ENCODE measurements at regions of chr16 and their contacts with region 1.

Region 1: DNA sequence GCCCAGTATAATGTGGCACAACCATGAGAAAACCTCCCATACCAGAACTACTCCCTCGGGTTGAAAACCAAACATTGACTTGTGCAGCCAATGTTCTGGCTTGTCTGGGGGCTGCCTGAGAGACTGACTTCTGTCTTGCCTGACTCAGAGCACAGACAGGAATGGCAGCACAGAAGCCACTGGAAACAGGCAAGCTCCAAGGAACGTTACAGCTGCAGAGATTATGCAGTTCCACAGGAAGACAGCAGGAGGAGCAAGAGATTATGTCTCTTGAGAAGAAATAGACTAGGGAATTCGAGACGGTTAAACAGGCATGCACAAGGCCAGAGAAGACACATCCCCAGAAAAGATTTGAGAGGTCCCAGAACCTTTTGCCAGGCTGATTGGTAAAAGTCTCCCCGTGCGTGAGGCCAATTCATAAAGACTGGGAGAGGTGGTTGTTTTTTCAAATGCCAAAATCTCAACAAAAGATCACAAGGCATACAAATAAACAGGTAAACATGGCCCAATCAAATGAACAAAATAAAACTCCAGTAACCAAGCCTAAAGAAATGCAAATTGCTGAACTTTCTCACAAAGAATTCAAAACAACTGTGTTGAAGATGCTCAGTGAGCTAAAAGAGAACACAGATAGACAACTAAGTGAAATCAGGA is 90.6 kb upstream of the CDH5 start:
- DNase-seq: peak; percentile 50 to 77
- H3K4me3 ChIP-seq: no peak overlapping the region
- H3K27ac ChIP-seq: no peak overlapping the region
- H3K4me1 ChIP-seq: peaks cover 0 to 5% (median 2%) of the 10 kb centered on the region in 4 experiments; a peak in 3 of 7 replicates
- H3K27me3 ChIP-seq: peaks cover 0 to 7% (median 1%) of the 10 kb centered on the region in 4 experiments; a peak in 3 of 7 replicates
- CTCF ChIP-seq: peak; percentile 11 to 83 (median 76)
- EP300 ChIP-seq: no peak
- POLR2A ChIP-seq: no peak
- RAD21 ChIP-seq: peak; percentile 61 to 73

Region 2: DNA sequence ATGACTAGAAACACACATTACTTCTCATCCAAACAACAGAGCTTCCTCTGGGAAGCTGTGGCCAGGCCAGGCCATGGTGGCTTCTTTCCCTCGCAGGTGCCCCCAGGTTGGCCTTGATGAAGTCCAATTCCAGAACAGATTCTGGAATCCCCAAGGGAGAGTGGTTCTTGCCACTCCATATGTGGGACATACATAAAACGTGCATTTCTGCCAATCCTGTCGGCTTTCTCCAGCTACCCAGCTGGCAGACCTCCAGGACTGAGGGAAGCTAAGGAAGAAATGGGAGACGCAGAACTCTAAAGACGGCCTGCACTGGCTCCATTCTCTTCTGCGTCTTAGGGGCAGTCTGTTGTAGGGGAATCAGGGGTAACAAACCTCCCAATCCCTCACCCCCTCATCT is 128.6 kb before region 1 on chr16:
- CTCF ChIA-PET with region 1: no interaction called
- POLR2A ChIA-PET with region 1: no interaction called
- DNase-seq: no peak
- H3K4me3 ChIP-seq: no peak overlapping the region
- H3K27ac ChIP-seq: no peak overlapping the region
- H3K4me1 ChIP-seq: no peaks in the 10 kb centered on the region
- H3K27me3 ChIP-seq: no peaks in the 10 kb centered on the region
- CTCF ChIP-seq: no peak
- EP300 ChIP-seq: no peak
- POLR2A ChIP-seq: no peak
- RAD21 ChIP-seq: no peak

Region 3: GRCh38 chr16:66287926-66288325 is 12.0 kb after region 1 on chr16:
- CTCF ChIA-PET with region 1: interaction called, 11 read pairs
- POLR2A ChIA-PET with region 1: no interaction called
- DNase-seq: no peak
- H3K4me3 ChIP-seq: no peak overlapping the region
- H3K27ac ChIP-seq: no peak overlapping the region
- H3K4me1 ChIP-seq: no peaks in the 10 kb centered on the region; a peak in 1 of 7 replicates
- H3K27me3 ChIP-seq: no peaks in the 10 kb centered on the region; a peak in 1 of 7 replicates
- CTCF ChIP-seq: no peak
- EP300 ChIP-seq: no peak
- POLR2A ChIP-seq: no peak
- RAD21 ChIP-seq: no peak

Region 4: DNA sequence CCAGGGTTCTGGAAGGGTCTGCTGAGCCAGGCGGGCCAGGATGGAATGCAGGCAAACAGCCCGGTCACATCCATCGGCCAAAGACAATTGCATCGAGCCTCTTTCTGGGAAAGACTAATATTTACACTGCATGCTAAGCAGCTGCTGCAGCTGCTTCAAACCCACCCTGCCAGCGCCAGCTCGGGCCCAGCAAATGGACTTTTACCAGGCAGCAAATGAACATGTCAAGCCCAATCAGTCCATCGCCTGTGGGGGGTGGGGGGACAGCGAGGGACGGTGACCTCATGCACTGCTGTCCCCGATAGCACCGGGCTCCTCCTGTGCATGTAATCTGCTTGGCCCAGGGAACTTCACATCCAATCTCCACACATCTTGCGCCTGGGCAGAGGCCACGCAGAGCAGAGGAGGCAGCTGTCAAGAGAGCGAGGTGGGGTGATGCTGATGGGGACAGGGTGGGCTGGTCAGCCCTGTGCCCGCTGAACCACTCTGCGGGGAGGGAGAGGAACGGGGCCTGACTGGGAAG is 51.1 kb after region 1 on chr16:
- CTCF ChIA-PET with region 1: interaction called, 13 read pairs
- POLR2A ChIA-PET with region 1: no interaction called
- DNase-seq: no peak
- H3K4me3 ChIP-seq: no peak overlapping the region
- H3K27ac ChIP-seq: no peak overlapping the region
- H3K4me1 ChIP-seq: peaks cover 2 to 10% (median 4%) of the 10 kb centered on the region in 4 experiments; a peak in 6 of 7 replicates
- H3K27me3 ChIP-seq: no peaks in the 10 kb centered on the region
- CTCF ChIP-seq: no peak
- EP300 ChIP-seq: no peak
- POLR2A ChIP-seq: no peak
- RAD21 ChIP-seq: no peak